ENCODE measurements at regions of chr22 and their contacts with region 1.

Region 1: GRCh38 chr22:22748297-22748743 is 103.9 kb downstream of the GGTLC2 start:
- DNase-seq: peak in 5 of 9 experiments; percentile 22 to 77 (median 45)
- ATAC-seq: peak; percentile 52
- H3K4me3 ChIP-seq: no peak overlapping the region
- H3K4me3 Mint-ChIP-seq: no peak overlapping the region
- H3K27ac ChIP-seq: no peak overlapping the region
- H3K27ac Mint-ChIP-seq: peak overlapping the region; percentile 32
- H3K4me1 ChIP-seq: peaks cover 12% of the 10 kb centered on the region
- H3K4me1 Mint-ChIP-seq: peaks cover 35% of the 10 kb centered on the region
- H3K27me3 ChIP-seq: no peaks in the 10 kb centered on the region
- H3K27me3 Mint-ChIP-seq: peaks cover 8% of the 10 kb centered on the region
- CTCF ChIP-seq: peak; percentile 69

Region 2: GRCh38 chr22:22720201-22720723 is 28.1 kb before region 1 on chr22:
- CTCF ChIA-PET with region 1: interaction called, 47 read pairs
- POLR2A ChIA-PET with region 1: no interaction called
- intact Hi-C with region 1: loop called (anchors 1 to 2 kb)
- DNase-seq: peak in 6 of 9 experiments; percentile 33 to 83 (median 64)
- ATAC-seq: peak; percentile 68
- H3K4me3 ChIP-seq: no peak overlapping the region
- H3K4me3 Mint-ChIP-seq: no peak overlapping the region
- H3K27ac ChIP-seq: peak overlapping the region in 1 of 2 experiments; percentile 74
- H3K27ac Mint-ChIP-seq: peak overlapping the region; percentile 81
- H3K4me1 ChIP-seq: peaks cover 25% of the 10 kb centered on the region
- H3K4me1 Mint-ChIP-seq: peaks cover 30% of the 10 kb centered on the region
- H3K27me3 ChIP-seq: no peaks in the 10 kb centered on the region
- H3K27me3 Mint-ChIP-seq: no peaks in the 10 kb centered on the region
- CTCF ChIP-seq: peak; percentile 47

Region 3: GRCh38 chr22:22761963-22762772 is 13.8 kb after region 1 on chr22:
- CTCF ChIA-PET with region 1: interaction called, 167 read pairs
- POLR2A ChIA-PET with region 1: interaction called, 15 read pairs
- intact Hi-C with region 1: no loop called
- DNase-seq: no peak
- ATAC-seq: no peak
- H3K4me3 ChIP-seq: peak overlapping the region in 1 of 2 experiments; percentile 58
- H3K4me3 Mint-ChIP-seq: peak overlapping the region; percentile 68
- H3K27ac ChIP-seq: peak overlapping the region in 1 of 2 experiments; percentile 36
- H3K27ac Mint-ChIP-seq: peak overlapping the region; percentile 82
- H3K4me1 ChIP-seq: peaks cover 8% of the 10 kb centered on the region
- H3K4me1 Mint-ChIP-seq: peaks cover 55% of the 10 kb centered on the region
- H3K27me3 ChIP-seq: no peaks in the 10 kb centered on the region
- H3K27me3 Mint-ChIP-seq: no peaks in the 10 kb centered on the region
- CTCF ChIP-seq: no peak

Region 4: DNA sequence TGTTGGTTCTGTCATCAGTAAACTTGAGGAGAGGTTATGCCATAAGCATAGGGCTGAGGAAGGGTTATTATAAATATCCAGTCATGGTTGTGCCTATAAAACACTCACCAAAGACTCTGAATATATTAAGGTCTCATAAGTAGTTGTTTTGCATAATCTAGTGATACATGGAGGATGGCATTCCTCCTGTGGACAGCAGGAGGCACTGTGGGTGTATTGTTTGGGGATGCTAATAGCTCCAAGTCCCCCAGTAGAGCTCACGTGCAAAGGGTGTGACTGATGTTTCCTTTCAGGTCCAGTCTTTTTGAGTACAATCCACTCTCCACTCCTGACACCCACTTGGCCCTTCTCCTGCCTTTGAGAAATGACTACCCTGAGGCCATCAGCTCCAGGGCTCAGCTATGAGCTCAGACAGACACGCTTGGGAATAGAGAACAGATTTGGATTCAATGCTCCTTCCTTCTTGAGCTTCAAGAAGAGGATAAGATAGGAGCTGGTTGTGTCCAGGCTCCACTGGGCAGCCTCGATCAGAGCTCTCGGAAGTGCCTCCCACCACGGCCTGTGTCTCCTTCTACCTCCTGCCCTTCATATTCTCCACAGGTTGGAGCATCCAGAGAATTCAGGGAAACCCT is 54.1 kb after region 1 on chr22:
- CTCF ChIA-PET with region 1: interaction called, 108 read pairs
- POLR2A ChIA-PET with region 1: interaction called, 8 read pairs
- intact Hi-C with region 1: loop called in 1 of 2 experiments (anchors 2 kb)
- DNase-seq: peak in 8 of 9 experiments; percentile 37 to 77 (median 58)
- ATAC-seq: peak; percentile 86
- H3K4me3 ChIP-seq: no peak overlapping the region
- H3K4me3 Mint-ChIP-seq: no peak overlapping the region
- H3K27ac ChIP-seq: no peak overlapping the region
- H3K27ac Mint-ChIP-seq: peak overlapping the region; percentile 18
- H3K4me1 ChIP-seq: no peaks in the 10 kb centered on the region
- H3K4me1 Mint-ChIP-seq: peaks cover 48% of the 10 kb centered on the region
- H3K27me3 ChIP-seq: no peaks in the 10 kb centered on the region
- H3K27me3 Mint-ChIP-seq: no peaks in the 10 kb centered on the region
- CTCF ChIP-seq: peak; percentile 80

Region 5: DNA sequence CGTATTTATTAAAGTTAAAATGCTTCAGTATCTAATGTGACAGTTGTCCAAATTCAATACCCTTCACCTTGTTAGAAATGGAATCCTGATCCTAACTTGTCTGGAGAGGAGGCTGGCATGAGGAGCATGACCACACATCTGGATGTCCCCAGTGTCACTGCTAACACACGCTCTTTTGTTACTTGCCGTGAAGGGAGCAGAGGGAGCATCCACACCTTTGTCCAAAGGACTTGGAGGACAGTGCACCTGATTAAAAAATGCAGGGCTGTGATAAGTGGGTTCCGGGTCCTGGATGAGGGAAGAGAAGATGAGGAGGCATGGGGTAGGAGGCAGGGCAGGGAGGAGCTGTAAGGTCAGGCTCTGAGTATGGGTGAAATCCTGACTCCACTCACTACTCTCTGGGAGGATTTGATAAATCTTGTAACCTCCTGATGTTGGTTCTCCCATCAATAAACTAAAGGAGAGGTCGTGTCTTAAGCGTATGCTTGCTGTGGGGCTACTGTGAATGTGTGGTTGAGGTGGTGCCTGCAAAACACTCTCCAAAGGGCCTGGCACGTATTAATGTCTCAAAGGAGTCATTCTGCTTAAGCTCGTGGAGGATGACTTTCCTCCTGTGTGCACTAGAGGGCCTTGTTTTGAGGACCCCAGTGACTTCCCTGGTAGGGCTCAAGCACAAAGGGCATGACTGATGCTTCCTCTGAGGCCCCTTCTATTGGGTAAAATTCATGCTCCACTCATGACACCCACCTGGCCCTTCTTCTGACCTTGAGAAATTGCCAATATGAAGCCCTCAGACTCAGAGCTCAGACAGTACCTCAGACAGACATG is 122.5 kb after region 1 on chr22:
- CTCF ChIA-PET with region 1: interaction called, 57 read pairs
- POLR2A ChIA-PET with region 1: no interaction called
- intact Hi-C with region 1: no loop called
- DNase-seq: peak in 3 of 9 experiments; percentile 29 to 47 (median 46)
- ATAC-seq: no peak
- H3K4me3 ChIP-seq: no peak overlapping the region
- H3K4me3 Mint-ChIP-seq: no peak overlapping the region
- H3K27ac ChIP-seq: no peak overlapping the region
- H3K27ac Mint-ChIP-seq: no peak overlapping the region
- H3K4me1 ChIP-seq: peaks cover 10% of the 10 kb centered on the region
- H3K4me1 Mint-ChIP-seq: peaks cover 26% of the 10 kb centered on the region
- H3K27me3 ChIP-seq: no peaks in the 10 kb centered on the region
- H3K27me3 Mint-ChIP-seq: no peaks in the 10 kb centered on the region
- CTCF ChIP-seq: no peak

Region 6: DNA sequence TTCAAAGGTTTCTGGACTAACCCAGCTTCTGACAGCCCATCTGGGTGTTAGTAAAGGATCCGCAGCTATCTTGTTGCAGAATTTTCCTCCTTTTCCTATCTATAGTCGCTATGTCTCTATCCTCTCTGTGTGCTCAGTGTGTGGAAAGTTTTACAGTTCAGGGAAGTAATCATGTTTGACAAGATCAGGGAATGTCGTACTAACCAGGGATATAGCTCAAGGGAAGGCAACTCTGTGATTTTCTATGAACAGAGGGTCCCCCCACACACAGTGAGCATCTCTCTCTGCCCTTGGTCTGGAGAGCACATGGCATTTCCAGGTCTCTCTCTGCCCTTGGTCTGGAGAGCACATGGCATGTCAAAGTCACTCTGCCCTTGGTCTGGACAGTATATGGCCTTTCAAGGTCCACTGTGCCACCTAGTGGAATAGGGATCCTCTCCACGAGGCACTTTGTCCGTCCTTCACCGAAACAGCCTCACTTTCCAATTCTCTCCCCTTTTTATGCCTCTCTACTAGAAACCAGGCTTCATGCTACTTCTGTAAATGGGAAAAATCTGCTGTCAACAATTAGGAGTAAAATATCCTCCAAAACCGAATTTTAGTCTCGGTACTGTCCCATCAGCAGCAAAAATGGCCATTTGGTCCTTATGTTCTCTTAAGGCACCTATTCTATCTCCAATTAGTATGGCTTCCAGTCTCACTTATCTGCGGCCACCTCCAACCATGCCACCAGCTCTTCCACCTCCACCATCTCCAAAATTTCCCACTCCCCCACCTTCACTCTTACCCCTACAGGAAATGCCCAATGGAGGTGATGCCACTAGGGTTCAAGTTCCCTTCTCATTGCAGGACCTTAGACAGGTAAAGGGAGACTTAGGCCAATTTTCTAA is 228.0 kb after region 1 on chr22:
- CTCF ChIA-PET with region 1: no interaction called
- POLR2A ChIA-PET with region 1: no interaction called
- intact Hi-C with region 1: no loop called
- DNase-seq: no peak
- ATAC-seq: no peak
- H3K4me3 ChIP-seq: no peak overlapping the region
- H3K4me3 Mint-ChIP-seq: no peak overlapping the region
- H3K27ac ChIP-seq: no peak overlapping the region
- H3K27ac Mint-ChIP-seq: no peak overlapping the region
- H3K4me1 ChIP-seq: no peaks in the 10 kb centered on the region
- H3K4me1 Mint-ChIP-seq: no peaks in the 10 kb centered on the region
- H3K27me3 ChIP-seq: no peaks in the 10 kb centered on the region
- H3K27me3 Mint-ChIP-seq: peaks cover 7% of the 10 kb centered on the region
- CTCF ChIP-seq: no peak